ENCODE measurements at regions of chr5 and their contacts with region 1.

Region 1: GRCh38 chr5:151051066-151051930 is 29.5 kb downstream of the TNIP1 start:
- DNase-seq: peak; percentile 89
- H3K4me3 Mint-ChIP-seq: no peak overlapping the region
- H3K27ac Mint-ChIP-seq: peak overlapping the region; percentile 46
- H3K4me1 Mint-ChIP-seq: peaks cover 9% of the 10 kb centered on the region
- H3K27me3 Mint-ChIP-seq: no peaks in the 10 kb centered on the region

Region 2: GRCh38 chr5:151068433-151069197 is 17.3 kb after region 1 on chr5:
- intact Hi-C with region 1: no loop called
- DNase-seq: no peak
- H3K4me3 Mint-ChIP-seq: peak overlapping the region; percentile 66
- H3K27ac Mint-ChIP-seq: peak overlapping the region; percentile 93
- H3K4me1 Mint-ChIP-seq: peaks cover 78% of the 10 kb centered on the region
- H3K27me3 Mint-ChIP-seq: no peaks in the 10 kb centered on the region

Region 3: GRCh38 chr5:151086905-151087360 is 35.6 kb after region 1 on chr5:
- intact Hi-C with region 1: loop called (anchors 2 kb)
- DNase-seq: peak; percentile 90
- H3K4me3 Mint-ChIP-seq: peak overlapping the region; percentile 86
- H3K27ac Mint-ChIP-seq: peak overlapping the region; percentile 79
- H3K4me1 Mint-ChIP-seq: peaks cover 64% of the 10 kb centered on the region
- H3K27me3 Mint-ChIP-seq: no peaks in the 10 kb centered on the region

Region 4: GRCh38 chr5:151164686-151165392 is 113.5 kb after region 1 on chr5:
- intact Hi-C with region 1: loop called (anchors 2 kb)
- DNase-seq: peak; percentile 95
- H3K4me3 Mint-ChIP-seq: no peak overlapping the region
- H3K27ac Mint-ChIP-seq: no peak overlapping the region
- H3K4me1 Mint-ChIP-seq: peaks cover 12% of the 10 kb centered on the region
- H3K27me3 Mint-ChIP-seq: no peaks in the 10 kb centered on the region